ENCODE measurements at regions of chr12 and their contacts with region 1.

Region 1: DNA sequence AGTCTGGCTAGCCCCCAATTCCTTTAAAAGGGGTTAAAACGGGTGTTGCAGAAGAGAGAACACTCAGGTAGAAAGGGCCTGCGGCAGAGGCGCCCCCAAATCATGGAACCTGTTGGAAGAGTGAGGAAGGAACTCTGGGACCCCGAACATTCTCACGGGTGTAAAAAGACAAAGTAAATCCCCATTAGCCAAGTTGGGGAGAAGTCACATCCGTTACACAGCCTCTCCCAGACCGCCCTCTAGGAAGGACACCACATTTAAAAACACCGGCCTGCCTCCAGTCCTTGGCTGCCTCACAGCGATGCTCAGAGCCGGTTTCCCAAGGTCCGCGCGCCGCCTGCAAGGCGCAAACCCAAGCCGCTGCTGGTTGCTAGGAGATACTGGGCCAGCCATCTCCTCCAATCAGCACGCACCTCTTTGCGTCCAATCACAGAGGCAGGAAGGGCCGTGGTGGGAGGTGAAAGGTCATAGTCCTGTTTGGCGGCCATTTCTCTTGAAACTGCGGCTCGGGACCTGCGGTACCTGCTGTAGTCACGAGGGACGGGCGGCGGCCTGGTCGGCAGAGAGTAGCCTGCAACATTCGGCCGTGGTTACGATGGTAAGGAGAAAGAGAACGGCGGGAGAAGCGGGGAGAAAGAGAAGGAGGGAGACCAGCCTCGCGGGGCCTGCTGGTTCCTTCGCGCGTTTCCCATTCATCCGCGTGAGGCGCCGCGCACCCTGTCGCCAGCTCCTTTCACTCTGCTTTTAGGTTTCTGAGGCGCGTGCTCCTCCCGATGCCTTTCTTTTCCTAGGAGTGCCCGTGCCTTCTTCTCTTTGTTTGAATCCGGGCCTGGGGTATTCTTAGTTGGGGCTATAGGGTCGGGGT is at the start of gene SNRPF:
- DNase-seq: peak; percentile 85 to 98
- H3K4me3 ChIP-seq: peak within 1 kb of the TSS; percentile 80 to 81
- H3K27ac ChIP-seq: peak within 1 kb of the TSS; percentile 52 to 58
- H3K4me1 ChIP-seq: peaks cover 9 to 12% of the 10 kb centered on the region in 2 donors
- H3K27me3 ChIP-seq: no peaks in the 10 kb centered on the region
- CTCF ChIP-seq: peak in 1 of 3 experiments; percentile 24
- total RNA-seq, gene SNRPF: not detected

Region 2: DNA sequence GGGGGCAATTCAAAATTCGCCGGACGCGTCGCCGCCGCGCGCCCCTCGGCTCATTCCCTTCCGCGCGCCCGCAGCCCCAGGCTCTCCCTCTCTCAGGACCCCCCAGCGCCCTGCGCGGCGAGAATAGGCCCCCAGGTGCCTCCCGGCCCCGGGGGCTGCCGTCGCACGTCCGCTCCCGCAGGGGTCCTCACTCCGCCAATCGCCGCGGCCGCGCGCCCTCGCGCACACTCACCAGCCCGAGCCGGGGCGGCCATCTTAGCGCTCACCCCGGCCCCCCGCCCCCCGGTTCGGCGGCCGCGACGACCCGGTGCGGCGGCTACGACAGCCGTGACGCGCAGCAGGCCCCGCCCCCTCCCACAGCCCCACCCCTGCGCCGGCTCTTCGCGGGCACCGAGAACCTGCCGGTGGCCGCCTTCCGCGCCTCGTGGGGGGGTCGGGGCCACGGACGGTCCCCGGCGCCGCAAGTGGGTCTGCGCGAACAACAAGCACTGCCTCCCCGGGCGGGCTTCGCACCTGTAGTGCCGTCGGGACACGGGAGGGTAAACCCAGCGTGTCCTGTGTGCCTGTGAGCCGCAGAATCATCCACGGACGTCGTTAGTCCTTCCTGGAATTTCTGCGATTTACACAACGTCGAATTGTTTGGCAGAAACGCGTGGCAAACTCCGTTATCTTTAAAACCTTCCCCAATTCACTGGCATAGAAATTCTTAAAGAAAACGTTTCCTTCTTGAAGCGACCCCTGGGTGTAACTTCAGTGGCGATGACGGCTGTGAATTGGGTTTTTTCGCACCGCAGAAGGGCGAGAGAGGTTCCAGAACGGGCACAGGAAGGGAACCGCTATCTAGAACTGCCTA is 309.9 kb before region 1 on chr12:
- intact Hi-C with region 1: loop called (anchors 1 kb)
- DNase-seq: peak in 1 of 2 donors; percentile 77
- H3K4me3 ChIP-seq: peak overlapping the region; percentile 88 to 93
- H3K27ac ChIP-seq: peak overlapping the region; percentile 71 to 77
- H3K4me1 ChIP-seq: no peaks in the 10 kb centered on the region
- H3K27me3 ChIP-seq: no peaks in the 10 kb centered on the region
- CTCF ChIP-seq: peak in 1 of 3 experiments; percentile 4

Region 3: GRCh38 chr12:95763809-95764253 is 94.9 kb before region 1 on chr12:
- intact Hi-C with region 1: no loop called
- DNase-seq: peak in 1 of 2 donors; percentile 66
- H3K4me3 ChIP-seq: no peak overlapping the region
- H3K27ac ChIP-seq: no peak overlapping the region
- H3K4me1 ChIP-seq: peaks cover 0 to 20% of the 10 kb centered on the region in 2 donors
- H3K27me3 ChIP-seq: no peaks in the 10 kb centered on the region
- CTCF ChIP-seq: no peak

Region 4: DNA sequence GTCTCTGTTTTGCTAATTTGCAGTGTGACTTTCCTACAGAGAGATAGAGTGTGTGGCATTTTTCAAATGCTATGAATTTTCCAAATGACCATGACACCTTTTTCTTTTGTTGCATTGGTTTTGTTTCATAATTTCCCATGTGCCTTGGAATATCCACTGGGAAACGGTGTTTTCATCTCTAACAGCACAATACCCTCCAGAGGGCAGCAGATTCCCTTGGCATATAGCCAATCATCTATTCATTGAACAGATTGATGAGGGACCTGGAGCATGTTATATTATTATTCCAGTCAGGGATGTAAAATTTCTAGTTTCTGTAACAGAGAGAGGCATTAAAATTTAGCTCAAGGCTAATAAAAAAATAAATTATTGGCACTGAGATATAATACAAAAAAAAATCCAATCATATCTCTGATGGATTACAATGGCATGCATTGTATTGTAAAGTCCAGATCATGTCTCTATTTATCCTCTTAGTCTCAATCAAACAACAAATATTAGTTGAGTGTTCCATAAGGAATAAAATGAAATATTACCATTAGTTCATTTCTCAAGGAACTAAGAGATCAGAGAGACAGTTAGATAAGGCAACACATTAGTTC is 38.5 kb before region 1 on chr12:
- intact Hi-C with region 1: no loop called
- DNase-seq: no peak
- H3K4me3 ChIP-seq: no peak overlapping the region
- H3K27ac ChIP-seq: no peak overlapping the region
- H3K4me1 ChIP-seq: no peaks in the 10 kb centered on the region
- H3K27me3 ChIP-seq: no peaks in the 10 kb centered on the region
- CTCF ChIP-seq: peak; percentile 21 to 47 (median 35)

Region 5: DNA sequence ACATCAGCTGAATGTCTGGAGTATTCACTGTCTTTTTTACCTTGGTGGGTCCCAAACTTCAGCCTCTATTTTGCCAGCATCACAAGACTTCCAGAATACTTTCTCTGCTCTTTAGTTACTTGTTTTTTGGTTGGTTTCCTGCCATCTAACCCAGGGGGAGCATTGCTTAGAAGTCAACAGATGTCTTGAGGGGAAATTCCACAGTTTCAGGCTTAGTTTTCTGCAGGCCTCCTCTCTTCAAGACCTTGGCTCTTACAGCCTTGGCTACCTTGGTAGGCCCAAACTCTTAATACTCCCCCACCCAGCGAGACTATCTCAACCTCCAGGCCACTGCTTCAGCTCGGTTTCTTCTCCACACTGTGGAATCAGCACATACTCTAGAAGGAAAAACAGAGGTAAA is 1090.1 kb after region 1 on chr12:
- intact Hi-C with region 1: no loop called
- DNase-seq: no peak
- H3K4me3 ChIP-seq: no peak overlapping the region
- H3K27ac ChIP-seq: no peak overlapping the region
- H3K4me1 ChIP-seq: no peaks in the 10 kb centered on the region
- H3K27me3 ChIP-seq: no peaks in the 10 kb centered on the region
- CTCF ChIP-seq: no peak